ENCODE measurements at regions of chrX and their contacts with region 1.

Region 1: GRCh38 chrX:111869639-111870034 is 6.3 kb upstream of the TRPC5OS start:
- DNase-seq: peak; percentile 66
- H3K4me3 ChIP-seq: no peak overlapping the region
- H3K27ac ChIP-seq: no peak overlapping the region
- H3K4me1 ChIP-seq: no peaks in the 10 kb centered on the region
- H3K27me3 ChIP-seq: no peaks in the 10 kb centered on the region
- CTCF ChIP-seq: peak; percentile 73

Region 2: DNA sequence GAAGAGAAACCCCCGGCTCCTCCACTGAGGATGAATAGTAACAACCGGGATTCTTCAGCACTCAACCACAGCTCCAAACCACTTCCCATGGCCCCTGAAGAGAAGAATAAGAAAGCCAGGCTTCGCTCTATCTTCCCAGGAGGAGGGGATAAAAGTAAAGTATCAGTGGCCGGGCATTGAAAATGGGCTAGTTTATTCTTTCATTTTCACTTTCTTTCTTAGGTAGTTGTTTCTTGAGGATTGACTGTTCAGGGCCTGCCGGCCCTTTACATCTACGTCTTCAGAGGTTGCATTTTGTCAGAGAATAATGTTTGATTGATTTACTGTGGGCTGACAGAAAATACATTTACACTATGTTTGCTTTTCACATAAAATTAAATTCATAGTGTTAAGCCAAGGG is 746.5 kb before region 1 on chrX:
- CTCF ChIA-PET with region 1: no interaction called
- POLR2A ChIA-PET with region 1: no interaction called
- intact Hi-C with region 1: no loop called
- DNase-seq: no peak
- H3K4me3 ChIP-seq: no peak overlapping the region
- H3K27ac ChIP-seq: no peak overlapping the region
- H3K4me1 ChIP-seq: no peaks in the 10 kb centered on the region
- H3K27me3 ChIP-seq: peaks cover 25% of the 10 kb centered on the region
- CTCF ChIP-seq: no peak

Region 3: GRCh38 chrX:111728096-111728495 is 141.5 kb before region 1 on chrX:
- CTCF ChIA-PET with region 1: no interaction called
- POLR2A ChIA-PET with region 1: no interaction called
- intact Hi-C with region 1: no loop called
- DNase-seq: no peak
- H3K4me3 ChIP-seq: no peak overlapping the region
- H3K27ac ChIP-seq: no peak overlapping the region
- H3K4me1 ChIP-seq: no peaks in the 10 kb centered on the region
- H3K27me3 ChIP-seq: peaks cover 4% of the 10 kb centered on the region
- CTCF ChIP-seq: no peak

Region 4: GRCh38 chrX:111823128-111823527 is 46.5 kb before region 1 on chrX:
- CTCF ChIA-PET with region 1: no interaction called
- POLR2A ChIA-PET with region 1: no interaction called
- intact Hi-C with region 1: no loop called
- DNase-seq: peak; percentile 33
- H3K4me3 ChIP-seq: no peak overlapping the region
- H3K27ac ChIP-seq: no peak overlapping the region
- H3K4me1 ChIP-seq: no peaks in the 10 kb centered on the region
- H3K27me3 ChIP-seq: no peaks in the 10 kb centered on the region
- CTCF ChIP-seq: peak; percentile 41

Region 5: DNA sequence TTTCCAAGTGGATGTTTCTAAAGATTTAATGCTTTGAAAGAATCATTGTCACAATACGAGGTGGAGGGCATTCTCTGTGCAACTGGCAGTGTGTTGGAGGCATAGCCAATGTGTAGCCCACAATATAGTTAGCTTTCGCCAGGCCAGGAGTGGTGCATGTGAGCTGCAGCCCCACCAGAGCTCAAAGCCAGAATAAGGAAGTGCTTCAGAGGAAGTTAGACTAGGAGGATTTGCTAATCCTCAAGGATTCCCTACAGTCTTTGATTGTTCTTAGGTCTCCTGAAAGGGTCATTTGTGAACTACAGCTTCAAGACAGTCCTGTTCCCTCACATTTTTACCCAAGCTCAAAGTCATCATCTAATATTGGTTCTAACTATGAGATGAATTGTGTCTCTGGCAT is 22.7 kb after region 1 on chrX:
- CTCF ChIA-PET with region 1: no interaction called
- POLR2A ChIA-PET with region 1: no interaction called
- intact Hi-C with region 1: no loop called
- DNase-seq: no peak
- H3K4me3 ChIP-seq: no peak overlapping the region
- H3K27ac ChIP-seq: no peak overlapping the region
- H3K4me1 ChIP-seq: no peaks in the 10 kb centered on the region
- H3K27me3 ChIP-seq: peaks cover 9% of the 10 kb centered on the region
- CTCF ChIP-seq: no peak

Region 6: GRCh38 chrX:112025753-112026152 is 156.1 kb after region 1 on chrX:
- CTCF ChIA-PET with region 1: no interaction called
- POLR2A ChIA-PET with region 1: no interaction called
- intact Hi-C with region 1: loop called (anchors 5 kb)
- DNase-seq: no peak
- H3K4me3 ChIP-seq: no peak overlapping the region
- H3K27ac ChIP-seq: no peak overlapping the region
- H3K4me1 ChIP-seq: no peaks in the 10 kb centered on the region
- H3K27me3 ChIP-seq: no peaks in the 10 kb centered on the region
- CTCF ChIP-seq: no peak

Region 7: GRCh38 chrX:112043997-112044396 is 174.4 kb after region 1 on chrX:
- CTCF ChIA-PET with region 1: no interaction called
- POLR2A ChIA-PET with region 1: no interaction called
- intact Hi-C with region 1: loop called (anchors 5 kb)
- DNase-seq: peak; percentile 6
- H3K4me3 ChIP-seq: no peak overlapping the region
- H3K27ac ChIP-seq: no peak overlapping the region
- H3K4me1 ChIP-seq: no peaks in the 10 kb centered on the region
- H3K27me3 ChIP-seq: peaks cover 17% of the 10 kb centered on the region
- CTCF ChIP-seq: peak; percentile 38; the same call in 1 of the 2 replicates

Region 8: DNA sequence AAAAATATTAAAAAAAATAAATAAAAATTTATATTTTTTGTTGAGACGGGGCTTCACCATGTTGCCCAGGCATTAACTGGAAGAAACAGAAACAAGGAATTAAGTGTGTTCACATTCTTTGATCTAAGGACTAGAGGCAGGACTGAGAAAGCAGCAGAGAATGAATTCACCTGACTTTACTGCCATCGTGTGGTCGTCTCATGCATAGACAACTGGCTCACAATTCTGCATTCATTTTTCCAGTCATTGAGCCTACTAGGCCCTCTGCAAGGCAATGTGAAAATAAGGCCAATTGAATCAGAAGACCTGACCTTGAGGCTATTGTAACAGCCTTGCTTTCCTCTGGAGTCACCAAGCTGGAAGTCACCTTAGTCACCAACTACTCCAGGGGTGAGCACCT is 772.7 kb after region 1 on chrX:
- CTCF ChIA-PET with region 1: interaction called, 3 read pairs
- POLR2A ChIA-PET with region 1: no interaction called
- intact Hi-C with region 1: loop called (anchors 2 kb)
- DNase-seq: peak; percentile 57
- H3K4me3 ChIP-seq: no peak overlapping the region
- H3K27ac ChIP-seq: no peak overlapping the region
- H3K4me1 ChIP-seq: no peaks in the 10 kb centered on the region
- H3K27me3 ChIP-seq: no peaks in the 10 kb centered on the region
- CTCF ChIP-seq: peak; percentile 71

Measured in A673 (cell line).